Astrocyte of the cerebellum (primary cell): ENCODE measurements at regions of chr20 and their contacts with region 1.

Region 1: GRCh38 chr20:33992923-33993575 is 662 bp upstream of the RALY start:
- DNase-seq: peak; percentile 99
- H3K4me3 ChIP-seq: peak overlapping the region; percentile 94
- CTCF ChIP-seq: no peak

Region 2: GRCh38 chr20:33893314-33893713 is 99.7 kb before region 1 on chr20:
- in situ Hi-C with region 1: loop called (anchors 5 kb)
- DNase-seq: no peak
- H3K4me3 ChIP-seq: no peak overlapping the region
- CTCF ChIP-seq: no peak

Region 3: DNA sequence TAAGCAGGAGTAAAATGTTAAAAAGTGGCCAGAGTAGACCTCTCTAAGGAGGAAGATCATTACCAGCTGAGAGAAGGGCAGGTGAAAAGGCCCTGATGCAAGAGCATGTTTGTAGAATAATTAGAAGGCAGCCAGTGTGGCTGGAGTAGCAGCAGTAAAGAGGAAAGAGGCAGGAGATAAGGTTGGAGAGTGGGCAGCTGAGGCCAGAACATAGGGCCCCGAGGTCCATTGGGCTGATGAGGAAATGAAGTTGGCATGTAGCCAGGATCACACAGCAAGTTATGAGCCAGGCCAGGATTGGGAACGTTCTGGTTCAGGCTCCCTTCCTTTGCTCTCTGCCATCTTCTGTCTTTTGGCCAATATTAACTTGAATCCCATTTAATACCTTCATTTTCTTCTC is 52.2 kb after region 1 on chr20:
- in situ Hi-C with region 1: no loop called
- DNase-seq: no peak
- H3K4me3 ChIP-seq: no peak overlapping the region
- CTCF ChIP-seq: no peak

Region 4: DNA sequence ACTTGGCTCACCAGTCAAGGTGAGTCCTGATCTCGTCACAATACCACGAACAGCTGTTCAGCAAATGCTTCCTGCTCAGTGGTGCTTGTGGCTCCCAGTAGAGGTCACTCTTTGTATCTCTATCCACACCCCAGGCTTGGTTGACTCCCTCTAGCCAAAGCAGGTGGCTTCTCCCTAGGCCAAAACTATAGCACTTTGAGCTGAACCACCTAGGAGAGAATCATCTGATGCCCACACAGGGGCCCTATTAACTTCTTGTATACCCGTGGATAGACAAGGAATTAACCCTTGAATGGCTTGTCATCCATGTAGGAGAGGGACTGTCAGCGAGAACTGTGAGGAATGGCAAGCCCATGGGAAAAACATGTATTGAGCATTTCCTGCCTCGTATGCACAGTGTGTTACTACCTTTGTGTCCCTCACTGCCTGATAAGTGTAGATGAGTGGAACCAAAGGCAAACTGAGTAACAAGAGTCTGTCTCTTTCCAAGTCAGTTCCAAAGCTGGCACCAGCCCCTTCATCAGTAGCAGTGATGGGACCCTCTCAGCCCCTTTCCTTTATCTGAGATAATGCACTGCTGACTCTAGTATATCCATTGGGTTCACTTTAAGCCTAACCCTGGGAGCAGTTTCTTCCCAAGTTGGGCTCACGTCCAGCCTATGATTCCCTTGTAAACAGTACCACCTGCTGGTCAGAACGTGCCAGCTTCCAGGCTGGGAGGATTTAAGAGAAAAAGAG is 76.5 kb after region 1 on chr20:
- in situ Hi-C with region 1: no loop called
- DNase-seq: peak; percentile 84
- H3K4me3 ChIP-seq: no peak overlapping the region
- CTCF ChIP-seq: peak; percentile 83